ENCODE measurements at regions of chr22 and their contacts with region 1.

Region 1: GRCh38 chr22:39236321-39237317 is 8.2 kb downstream of the PDGFB start:
- DNase-seq: peak; percentile 60 to 74
- H3K4me3 ChIP-seq: no peak overlapping the region
- H3K27ac ChIP-seq: peak overlapping the region in 2 of 3 donors; percentile 75 to 81
- H3K4me1 ChIP-seq: peaks cover 55 to 85% of the 10 kb centered on the region in 2 donors
- H3K27me3 ChIP-seq: no peaks in the 10 kb centered on the region
- CTCF ChIP-seq: no peak
- POLR2A ChIP-seq: no peak

Region 2: GRCh38 chr22:39155421-39155820 is 81.2 kb before region 1 on chr22:
- intact Hi-C with region 1: no loop called
- DNase-seq: no peak
- H3K4me3 ChIP-seq: no peak overlapping the region
- H3K27ac ChIP-seq: no peak overlapping the region
- H3K4me1 ChIP-seq: peaks cover 9 to 16% of the 10 kb centered on the region in 2 donors
- H3K27me3 ChIP-seq: no peaks in the 10 kb centered on the region
- CTCF ChIP-seq: no peak
- POLR2A ChIP-seq: no peak

Region 3: GRCh38 chr22:39170825-39171622 is 65.6 kb before region 1 on chr22:
- intact Hi-C with region 1: loop called (anchors 10 kb)
- DNase-seq: peak; percentile 75 to 80
- H3K4me3 ChIP-seq: no peak overlapping the region
- H3K27ac ChIP-seq: no peak overlapping the region
- H3K4me1 ChIP-seq: peaks cover 28 to 42% of the 10 kb centered on the region in 2 donors
- H3K27me3 ChIP-seq: no peaks in the 10 kb centered on the region
- CTCF ChIP-seq: peak; percentile 92 to 97 (median 96)
- POLR2A ChIP-seq: no peak

Region 4: GRCh38 chr22:39292561-39293098 is 56.0 kb after region 1 on chr22:
- intact Hi-C with region 1: loop called (anchors 10 kb)
- DNase-seq: peak; percentile 86 to 87
- H3K4me3 ChIP-seq: no peak overlapping the region
- H3K27ac ChIP-seq: peak overlapping the region in 2 of 3 donors; percentile 63 to 76
- H3K4me1 ChIP-seq: peaks cover 14 to 40% of the 10 kb centered on the region in 2 donors
- H3K27me3 ChIP-seq: no peaks in the 10 kb centered on the region
- CTCF ChIP-seq: no peak
- POLR2A ChIP-seq: peak in 1 of 2 donors; percentile 28

Region 5: DNA sequence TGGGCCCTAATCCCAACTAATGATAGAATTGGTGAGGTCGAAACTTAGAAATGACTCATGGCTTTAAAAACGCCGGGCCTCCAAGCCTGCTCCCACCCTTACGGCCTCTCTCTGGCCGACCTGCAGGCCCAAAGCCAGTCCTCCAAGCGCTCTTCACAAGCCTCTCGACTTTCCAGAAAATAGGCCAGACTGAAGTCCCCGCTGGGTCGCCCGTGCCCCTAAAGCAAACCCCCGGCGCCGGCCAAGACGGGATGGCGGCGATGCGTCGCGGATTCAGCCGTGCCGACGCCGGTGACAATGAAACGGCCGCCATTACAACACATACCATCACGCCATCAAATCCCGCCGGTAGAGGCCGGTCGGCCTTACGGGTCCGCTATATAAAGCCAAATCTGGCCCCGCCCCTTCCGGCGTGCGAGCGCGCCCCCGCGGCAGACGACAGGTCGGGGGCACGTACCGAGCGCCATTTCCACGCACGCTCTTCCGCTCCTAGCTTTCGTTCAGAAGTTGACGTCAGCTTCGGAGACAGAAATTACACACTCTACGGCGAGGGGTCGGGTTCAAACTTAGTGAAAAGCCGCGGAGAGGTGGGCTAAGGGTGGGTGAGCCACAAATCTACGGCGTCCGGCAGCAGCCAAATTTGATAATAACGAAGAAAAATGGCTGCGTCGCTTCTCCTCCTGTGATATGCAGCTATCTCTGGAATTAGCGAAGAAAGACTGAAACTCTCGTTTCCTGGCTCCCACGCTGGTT is 82.8 kb after region 1 on chr22 and contains the start of gene RPL3:
- intact Hi-C with region 1: loop called (anchors 10 kb)
- DNase-seq: peak; percentile 96
- H3K4me3 ChIP-seq: peak within 1 kb of the TSS; percentile 48 to 71 (median 69)
- H3K27ac ChIP-seq: peak within 1 kb of the TSS; percentile 96 to 97 (median 96)
- H3K4me1 ChIP-seq: peaks cover 20 to 36% of the 10 kb centered on the region in 2 donors
- H3K27me3 ChIP-seq: no peaks in the 10 kb centered on the region
- CTCF ChIP-seq: peak in 3 of 6 experiments; percentile 22 to 31 (median 24)
- POLR2A ChIP-seq: peak; percentile 78 to 94
- total RNA-seq, gene RPL3: 1,451 to 2,031 (median 1,880) TPM

Region 6: DNA sequence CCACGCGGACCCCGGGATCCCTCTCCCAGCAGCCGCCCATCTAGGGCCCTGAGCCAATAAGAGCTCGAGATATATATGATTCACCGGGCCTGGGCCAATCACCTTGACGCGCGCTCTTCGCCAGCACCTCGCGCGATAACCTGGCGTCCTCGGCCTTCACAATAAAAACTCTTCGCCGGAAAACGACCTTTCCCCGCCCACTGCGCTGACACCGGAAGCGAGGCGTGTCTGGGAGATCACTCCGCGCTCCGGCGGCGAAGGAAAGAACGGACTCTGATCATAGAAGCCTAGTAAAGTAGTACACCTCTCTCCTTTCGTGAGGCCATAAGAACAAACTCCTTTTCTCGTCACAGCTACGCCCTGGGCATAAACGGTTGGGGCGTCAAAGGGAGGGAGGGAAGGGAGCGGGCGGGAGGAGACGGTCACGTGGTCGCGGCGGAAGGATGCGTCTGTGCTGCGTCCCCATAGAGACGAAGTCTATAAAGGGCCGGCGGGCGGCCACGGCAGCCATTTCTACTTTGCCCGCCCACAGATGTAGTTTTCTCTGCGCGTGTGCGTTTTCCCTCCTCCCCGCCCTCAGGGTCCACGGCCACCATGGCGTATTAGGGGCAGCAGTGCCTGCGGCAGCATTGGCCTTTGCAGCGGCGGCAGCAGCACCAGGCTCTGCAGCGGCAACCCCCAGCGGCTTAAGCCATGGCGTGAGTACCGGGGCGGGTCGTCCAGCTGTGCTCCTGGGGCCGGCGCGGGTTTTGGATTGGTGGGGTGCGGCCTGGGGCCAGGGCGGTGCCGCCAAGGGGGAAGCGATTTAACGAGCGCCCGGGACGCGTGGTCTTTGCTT is 283.7 kb after region 1 on chr22 and contains the start of gene ATF4:
- intact Hi-C with region 1: loop called (anchors 10 kb)
- DNase-seq: peak; percentile 99
- H3K4me3 ChIP-seq: peak within 1 kb of the TSS; percentile 98 to 100 (median 99)
- H3K27ac ChIP-seq: peak within 1 kb of the TSS; percentile 99
- H3K4me1 ChIP-seq: peaks cover 28 to 44% of the 10 kb centered on the region in 2 donors
- H3K27me3 ChIP-seq: no peaks in the 10 kb centered on the region
- CTCF ChIP-seq: no peak
- POLR2A ChIP-seq: peak; percentile 88 to 96
- total RNA-seq, gene ATF4: 173 to 273 (median 210) TPM

Measured in thyroid gland (tissue), 4 donors.